ENCODE measurements at regions of chr18 and their contacts with region 1.

Region 1: DNA sequence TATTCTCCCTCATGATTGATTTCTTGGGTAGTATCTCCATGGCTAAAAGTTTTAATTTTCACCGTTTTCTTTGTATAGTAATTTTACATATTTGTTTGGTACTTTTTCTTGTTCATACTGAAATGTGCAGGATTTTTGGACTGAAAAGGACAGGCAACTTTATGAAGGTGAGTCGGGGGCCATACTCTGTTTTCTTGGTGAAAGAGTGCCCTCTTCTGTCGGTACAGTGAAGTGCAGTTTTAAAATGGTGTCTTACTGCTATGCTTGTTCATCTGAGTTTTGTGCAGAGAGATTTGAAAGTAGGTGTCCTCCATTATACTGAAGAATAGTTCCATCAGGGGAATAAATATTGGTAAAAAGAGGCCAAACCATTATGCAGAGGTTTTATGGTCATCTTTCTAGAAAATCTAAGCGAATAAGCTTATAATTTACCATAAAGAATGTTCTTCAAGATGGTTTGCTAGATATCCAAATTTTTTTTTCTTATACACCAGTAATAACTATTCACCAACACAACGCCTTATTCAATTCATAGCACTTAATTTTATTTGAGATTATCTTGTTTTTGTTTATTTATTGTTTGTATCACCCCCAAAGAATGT is 8.7 kb upstream of the SERPINB13 start:
- DNase-seq: peak in 1 of 2 experiments; percentile 64
- H3K4me3 ChIP-seq: no peak overlapping the region
- H3K27ac ChIP-seq: no peak overlapping the region
- H3K4me1 ChIP-seq: no peaks in the 10 kb centered on the region
- H3K27me3 ChIP-seq: no peaks in the 10 kb centered on the region
- CTCF ChIP-seq: peak in 2 of 3 experiments; percentile 75 to 77; a peak in 3 of 4 replicates
- EP300 ChIP-seq: no peak
- POLR2A ChIP-seq: no peak
- RAD21 ChIP-seq: peak; percentile 89 to 92

Region 2: DNA sequence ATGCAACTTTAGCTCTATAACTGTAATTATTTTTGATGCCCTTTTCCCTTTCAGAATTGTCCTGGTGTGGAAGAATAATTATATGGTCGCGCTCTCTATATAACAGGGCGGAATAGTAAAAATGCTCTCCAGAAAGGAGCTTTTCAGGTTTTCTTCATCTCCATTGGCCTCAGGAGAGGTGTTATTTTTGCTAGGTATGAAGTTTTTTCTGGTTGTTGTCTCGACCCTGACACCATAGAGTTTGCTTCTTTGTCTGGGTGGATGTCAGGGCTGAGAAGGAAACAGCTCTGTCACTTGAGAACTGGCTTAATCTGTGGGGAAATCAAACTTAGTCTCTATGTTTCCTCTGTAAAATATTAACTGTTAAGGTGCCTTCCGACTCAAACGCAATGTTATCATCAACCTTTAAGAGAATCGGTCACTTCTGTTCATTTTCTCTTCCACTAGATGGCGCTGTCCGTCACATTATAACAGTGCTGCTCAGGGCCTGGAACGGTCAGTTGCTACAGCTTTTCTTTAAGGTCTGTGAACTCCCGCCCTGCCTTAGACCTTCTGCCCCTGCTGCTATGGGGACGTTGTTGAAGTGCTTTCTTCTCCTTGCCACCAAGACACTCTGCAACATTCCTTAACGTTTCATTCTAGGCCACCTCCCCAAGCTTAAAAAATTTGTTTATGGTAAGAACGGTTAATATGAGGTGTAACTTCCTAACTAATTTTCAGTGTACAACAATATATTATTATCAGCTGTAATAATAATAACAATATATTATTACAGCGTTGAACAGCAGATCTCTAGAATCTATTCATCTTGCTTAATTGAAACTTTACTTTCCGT is 60.1 kb before region 1 on chr18:
- CTCF ChIA-PET with region 1: interaction called, 366 read pairs
- POLR2A ChIA-PET with region 1: no interaction called
- DNase-seq: peak; percentile 39 to 60
- H3K4me3 ChIP-seq: no peak overlapping the region
- H3K27ac ChIP-seq: no peak overlapping the region
- H3K4me1 ChIP-seq: peaks cover 2 to 14% (median 6%) of the 10 kb centered on the region in 4 experiments; a peak in 4 of 7 replicates
- H3K27me3 ChIP-seq: no peaks in the 10 kb centered on the region
- CTCF ChIP-seq: peak in 2 of 3 experiments; percentile 80 to 86; a peak in 3 of 4 replicates
- EP300 ChIP-seq: peak in 1 of 2 experiments; percentile 32; a peak in 1 of 3 replicates
- POLR2A ChIP-seq: no peak
- RAD21 ChIP-seq: peak; percentile 93 to 97

Region 3: DNA sequence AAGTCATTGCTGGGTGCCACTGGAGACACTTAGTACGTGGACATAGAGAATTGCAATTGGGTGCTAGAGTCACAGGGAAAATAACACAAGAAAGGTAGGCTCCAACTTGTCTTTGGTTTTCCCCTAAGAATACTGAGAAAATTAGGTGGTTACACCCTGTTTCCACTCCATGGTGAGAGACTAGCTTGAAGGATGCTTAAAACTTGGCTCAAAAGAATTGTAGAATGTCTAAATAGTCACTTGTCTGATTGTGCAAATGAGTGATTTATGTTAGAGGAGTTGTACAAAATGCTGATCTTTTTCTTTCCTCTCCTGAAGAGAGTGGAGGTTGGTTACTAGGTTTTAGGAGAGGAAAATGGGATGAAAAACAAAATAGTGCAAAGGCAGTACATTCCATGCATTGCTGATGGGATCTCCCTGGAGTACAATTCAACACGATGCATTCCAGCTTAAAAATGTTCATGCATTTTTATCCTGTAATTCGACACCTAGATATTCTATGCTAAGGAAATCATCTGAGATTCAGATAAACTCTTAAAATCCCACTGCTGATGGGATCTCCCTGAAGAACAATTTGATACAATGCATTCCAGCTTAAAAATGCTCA is 38.5 kb before region 1 on chr18:
- CTCF ChIA-PET with region 1: interaction called, 19 read pairs
- POLR2A ChIA-PET with region 1: no interaction called
- DNase-seq: no peak
- H3K4me3 ChIP-seq: no peak overlapping the region
- H3K27ac ChIP-seq: no peak overlapping the region
- H3K4me1 ChIP-seq: peaks cover 0 to 6% (median 0%) of the 10 kb centered on the region in 4 experiments; a peak in 1 of 7 replicates
- H3K27me3 ChIP-seq: no peaks in the 10 kb centered on the region; a peak in 1 of 7 replicates
- CTCF ChIP-seq: no peak
- EP300 ChIP-seq: no peak
- POLR2A ChIP-seq: no peak
- RAD21 ChIP-seq: no peak

Region 4: GRCh38 chr18:63590373-63590772 is 11.9 kb after region 1 on chr18:
- CTCF ChIA-PET with region 1: interaction called, 13 read pairs
- POLR2A ChIA-PET with region 1: no interaction called
- DNase-seq: no peak
- H3K4me3 ChIP-seq: no peak overlapping the region
- H3K27ac ChIP-seq: no peak overlapping the region
- H3K4me1 ChIP-seq: no peaks in the 10 kb centered on the region
- H3K27me3 ChIP-seq: no peaks in the 10 kb centered on the region
- CTCF ChIP-seq: no peak
- EP300 ChIP-seq: no peak
- POLR2A ChIP-seq: no peak
- RAD21 ChIP-seq: no peak

Region 5: GRCh38 chr18:63771031-63771430 is 192.6 kb after region 1 on chr18:
- CTCF ChIA-PET with region 1: no interaction called
- POLR2A ChIA-PET with region 1: no interaction called
- DNase-seq: no peak
- H3K4me3 ChIP-seq: no peak overlapping the region
- H3K27ac ChIP-seq: no peak overlapping the region
- H3K4me1 ChIP-seq: no peaks in the 10 kb centered on the region
- H3K27me3 ChIP-seq: no peaks in the 10 kb centered on the region
- CTCF ChIP-seq: no peak
- EP300 ChIP-seq: no peak
- POLR2A ChIP-seq: no peak
- RAD21 ChIP-seq: no peak

Region 6: GRCh38 chr18:63823518-63824219 is 245.2 kb after region 1 on chr18:
- CTCF ChIA-PET with region 1: interaction called, 10 read pairs
- POLR2A ChIA-PET with region 1: no interaction called
- DNase-seq: peak in 1 of 2 experiments; percentile 58
- H3K4me3 ChIP-seq: no peak overlapping the region
- H3K27ac ChIP-seq: no peak overlapping the region
- H3K4me1 ChIP-seq: no peaks in the 10 kb centered on the region
- H3K27me3 ChIP-seq: no peaks in the 10 kb centered on the region
- CTCF ChIP-seq: peak in 2 of 3 experiments; percentile 44 to 59; a peak in 3 of 4 replicates
- EP300 ChIP-seq: no peak
- POLR2A ChIP-seq: no peak
- RAD21 ChIP-seq: peak; percentile 39 to 50; a peak in 3 of 4 replicates

Region 7: GRCh38 chr18:63936156-63936931 is 357.9 kb after region 1 on chr18:
- CTCF ChIA-PET with region 1: interaction called, 13 read pairs
- POLR2A ChIA-PET with region 1: no interaction called
- DNase-seq: peak; percentile 70 to 88
- H3K4me3 ChIP-seq: peak overlapping the region; percentile 41 to 74 (median 56)
- H3K27ac ChIP-seq: no peak overlapping the region
- H3K4me1 ChIP-seq: 0 out of 7 replicates have a peak, but pooled peaks cover 0 to 3% (median 0%) of the 10 kb centered on the region in 4 experiments
- H3K27me3 ChIP-seq: peaks cover 3 to 19% (median 13%) of the 10 kb centered on the region in 4 experiments
- CTCF ChIP-seq: peak; percentile 77 to 82 (median 80)
- EP300 ChIP-seq: no peak
- POLR2A ChIP-seq: no peak
- RAD21 ChIP-seq: peak; percentile 83